ENCODE measurements at regions of chr15 and their contacts with region 1.

Region 1: GRCh38 chr15:57561041-57561711 is 30.5 kb upstream of the MYZAP start:
- DNase-seq: peak; percentile 81 to 89 (median 87)
- ATAC-seq: peak; percentile 93
- H3K4me3 ChIP-seq: no peak overlapping the region
- H3K27ac ChIP-seq: peak overlapping the region; percentile 4 to 74 (median 42)
- H3K4me1 ChIP-seq: peaks cover 18% of the 10 kb centered on the region
- H3K27me3 ChIP-seq: no peaks in the 10 kb centered on the region
- CTCF ChIP-seq: peak; percentile 87 to 96 (median 93)
- POLR2A ChIP-seq: no peak

Region 2: GRCh38 chr15:57462381-57462780 is 98.8 kb before region 1 on chr15:
- intact Hi-C with region 1: no loop called
- DNase-seq: no peak
- ATAC-seq: no peak
- H3K4me3 ChIP-seq: no peak overlapping the region
- H3K27ac ChIP-seq: no peak overlapping the region
- H3K4me1 ChIP-seq: peaks cover 10% of the 10 kb centered on the region
- H3K27me3 ChIP-seq: no peaks in the 10 kb centered on the region
- CTCF ChIP-seq: peak in 1 of 7 experiments; percentile 13
- POLR2A ChIP-seq: no peak

Region 3: GRCh38 chr15:57503066-57503702 is 58.0 kb before region 1 on chr15:
- intact Hi-C with region 1: no loop called
- DNase-seq: peak in 1 of 4 donors; percentile 43
- ATAC-seq: no peak
- H3K4me3 ChIP-seq: no peak overlapping the region
- H3K27ac ChIP-seq: peak overlapping the region; percentile 54 to 96 (median 81)
- H3K4me1 ChIP-seq: peaks cover 94% of the 10 kb centered on the region
- H3K27me3 ChIP-seq: no peaks in the 10 kb centered on the region
- CTCF ChIP-seq: peak in 4 of 7 experiments; percentile 10 to 36 (median 19)
- POLR2A ChIP-seq: no peak

Region 4: DNA sequence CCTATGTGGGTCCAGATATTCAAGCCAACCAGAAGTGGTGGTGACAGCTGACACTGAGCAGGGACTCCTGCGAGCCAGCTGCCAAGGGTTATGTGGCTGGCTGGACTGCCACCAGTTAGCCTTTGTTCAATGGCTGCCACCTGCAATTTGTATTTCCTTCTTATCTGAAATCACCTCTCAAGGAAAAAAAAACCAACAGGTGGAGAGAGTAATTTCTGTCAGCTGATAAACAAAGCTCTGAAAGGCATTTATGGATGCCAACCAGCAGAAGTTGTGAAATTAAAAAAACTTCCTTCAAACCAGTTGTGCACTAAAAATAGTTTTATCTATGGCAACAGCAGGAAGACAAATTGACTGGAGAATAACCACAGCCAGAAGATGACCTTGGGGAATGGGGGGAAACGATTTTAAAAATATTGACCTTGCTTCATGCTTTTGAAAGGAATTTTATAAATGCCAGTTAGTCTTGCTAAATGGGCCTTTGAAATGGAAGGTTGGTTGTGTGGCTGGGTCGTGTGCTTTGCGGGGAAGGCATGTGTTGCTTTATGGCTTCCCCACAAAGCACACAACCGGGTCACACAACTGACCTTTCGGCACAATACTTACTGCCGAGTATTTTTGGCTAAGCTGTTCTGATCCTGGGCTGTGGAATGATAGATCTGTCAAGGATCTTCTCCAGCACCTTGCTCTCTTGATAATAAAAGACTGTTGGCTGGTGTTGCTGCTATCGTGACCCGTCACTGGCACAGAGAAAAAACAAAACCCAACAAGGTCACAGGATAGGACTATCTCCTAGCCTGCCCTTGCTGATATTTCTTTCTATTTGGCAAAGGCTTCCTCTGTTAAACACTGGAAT is 34.1 kb after region 1 on chr15:
- intact Hi-C with region 1: loop called (anchors 5 kb)
- DNase-seq: peak; percentile 76 to 89 (median 86)
- ATAC-seq: peak; percentile 67
- H3K4me3 ChIP-seq: no peak overlapping the region
- H3K27ac ChIP-seq: peak overlapping the region; percentile 82 to 91 (median 88)
- H3K4me1 ChIP-seq: peaks cover 89% of the 10 kb centered on the region
- H3K27me3 ChIP-seq: no peaks in the 10 kb centered on the region
- CTCF ChIP-seq: peak in 1 of 7 experiments; percentile 19
- POLR2A ChIP-seq: peak in 1 of 3 donors; percentile 51

Region 5: DNA sequence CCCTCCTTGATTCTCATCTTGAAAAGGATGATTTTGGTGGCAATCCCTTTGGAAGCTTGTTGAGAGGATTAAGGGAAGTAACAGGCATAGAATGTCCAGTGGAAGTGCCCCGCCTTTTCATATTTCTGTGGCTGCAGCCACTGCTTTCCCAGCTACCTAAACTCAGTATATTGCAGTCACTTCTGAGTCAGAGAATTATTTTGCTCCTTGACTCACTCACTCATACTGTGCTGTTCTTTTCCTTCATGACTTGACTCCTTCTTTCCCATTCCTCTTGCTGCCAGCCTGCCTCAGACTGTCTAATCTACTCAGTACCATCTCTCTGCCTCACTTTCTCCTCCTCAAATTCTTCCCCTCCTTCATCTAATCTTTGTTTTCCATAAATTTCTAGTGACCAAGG is 118.8 kb after region 1 on chr15:
- intact Hi-C with region 1: no loop called
- DNase-seq: no peak
- ATAC-seq: no peak
- H3K4me3 ChIP-seq: no peak overlapping the region
- H3K27ac ChIP-seq: no peak overlapping the region
- H3K4me1 ChIP-seq: peaks cover 10% of the 10 kb centered on the region
- H3K27me3 ChIP-seq: no peaks in the 10 kb centered on the region
- CTCF ChIP-seq: no peak
- POLR2A ChIP-seq: no peak

Region 6: DNA sequence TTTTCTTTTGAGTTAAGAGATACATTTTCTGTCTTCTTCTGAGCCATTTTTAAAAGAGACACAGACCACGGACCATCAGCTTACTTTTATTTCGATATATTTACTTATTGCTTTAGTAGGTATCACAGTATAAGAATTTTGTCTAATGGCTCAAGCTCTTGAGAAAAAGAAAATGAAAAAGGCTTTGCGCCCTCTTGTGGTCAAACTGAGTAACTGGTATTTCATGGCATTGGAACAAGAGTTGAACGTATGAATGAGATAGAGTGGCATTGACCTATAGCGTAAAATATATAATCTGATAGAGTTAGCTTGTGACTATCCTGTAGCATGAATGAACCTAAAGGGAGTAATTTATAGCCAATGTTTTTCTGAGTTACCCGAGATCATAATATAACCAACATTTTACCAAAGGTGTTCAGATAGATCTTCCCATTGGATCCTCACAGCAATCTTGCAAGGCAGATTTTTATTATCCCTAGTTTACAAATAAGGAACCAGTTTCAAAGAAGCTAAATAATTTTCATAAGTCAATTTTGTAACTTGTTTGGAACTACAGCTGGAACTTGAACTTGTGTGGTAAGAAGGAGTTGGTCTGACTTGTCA is 300.0 kb after region 1 on chr15:
- intact Hi-C with region 1: loop called (anchors 5 kb)
- DNase-seq: peak; percentile 28 to 39 (median 38)
- ATAC-seq: peak; percentile 62
- H3K4me3 ChIP-seq: no peak overlapping the region
- H3K27ac ChIP-seq: no peak overlapping the region
- H3K4me1 ChIP-seq: no peaks in the 10 kb centered on the region
- H3K27me3 ChIP-seq: no peaks in the 10 kb centered on the region
- CTCF ChIP-seq: peak; percentile 64 to 89 (median 74)
- POLR2A ChIP-seq: no peak